ENCODE measurements at regions of chr11 and their contacts with region 1.

Region 1: GRCh38 chr11:128905345-128906184 is 14.4 kb downstream of the KCNJ5 start:
- DNase-seq: peak in 1 of 2 experiments; percentile 80
- H3K4me3 ChIP-seq: peak overlapping the region; percentile 49 to 68 (median 54)
- H3K27ac ChIP-seq: no peak overlapping the region
- H3K4me1 ChIP-seq: peaks cover 11 to 30% (median 23%) of the 10 kb centered on the region in 4 experiments
- H3K27me3 ChIP-seq: peaks cover 45 to 67% (median 61%) of the 10 kb centered on the region in 4 experiments
- CTCF ChIP-seq: peak; percentile 44 to 58 (median 48)
- EP300 ChIP-seq: no peak
- POLR2A ChIP-seq: no peak
- RAD21 ChIP-seq: peak; percentile 25 to 39; a peak in 2 of 4 replicates

Region 2: DNA sequence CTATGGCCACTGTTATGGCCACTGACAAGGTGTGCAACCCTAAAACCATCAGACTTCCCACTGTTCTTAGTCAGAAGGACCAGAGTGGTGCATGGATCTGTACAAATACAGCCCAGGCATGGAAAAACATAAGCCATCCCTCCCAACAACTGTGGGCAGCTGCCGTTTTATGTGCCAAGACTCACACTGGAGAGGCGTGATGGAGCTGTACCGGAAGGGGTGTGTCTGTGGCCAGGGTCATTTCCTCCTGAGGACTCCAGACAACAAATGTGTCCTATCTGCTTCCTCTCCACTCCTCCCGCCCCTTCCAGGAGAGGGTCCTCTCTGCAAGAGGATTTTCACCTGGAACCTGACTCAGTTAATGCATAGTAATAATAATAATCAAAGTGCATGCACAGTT is 67.9 kb before region 1 on chr11:
- CTCF ChIA-PET with region 1: no interaction called
- POLR2A ChIA-PET with region 1: no interaction called
- DNase-seq: no peak
- H3K4me3 ChIP-seq: no peak overlapping the region
- H3K27ac ChIP-seq: no peak overlapping the region
- H3K4me1 ChIP-seq: peaks cover 0 to 6% (median 0%) of the 10 kb centered on the region in 4 experiments; a peak in 2 of 7 replicates
- H3K27me3 ChIP-seq: no peaks in the 10 kb centered on the region
- CTCF ChIP-seq: no peak
- EP300 ChIP-seq: no peak
- POLR2A ChIP-seq: no peak
- RAD21 ChIP-seq: no peak

Region 3: DNA sequence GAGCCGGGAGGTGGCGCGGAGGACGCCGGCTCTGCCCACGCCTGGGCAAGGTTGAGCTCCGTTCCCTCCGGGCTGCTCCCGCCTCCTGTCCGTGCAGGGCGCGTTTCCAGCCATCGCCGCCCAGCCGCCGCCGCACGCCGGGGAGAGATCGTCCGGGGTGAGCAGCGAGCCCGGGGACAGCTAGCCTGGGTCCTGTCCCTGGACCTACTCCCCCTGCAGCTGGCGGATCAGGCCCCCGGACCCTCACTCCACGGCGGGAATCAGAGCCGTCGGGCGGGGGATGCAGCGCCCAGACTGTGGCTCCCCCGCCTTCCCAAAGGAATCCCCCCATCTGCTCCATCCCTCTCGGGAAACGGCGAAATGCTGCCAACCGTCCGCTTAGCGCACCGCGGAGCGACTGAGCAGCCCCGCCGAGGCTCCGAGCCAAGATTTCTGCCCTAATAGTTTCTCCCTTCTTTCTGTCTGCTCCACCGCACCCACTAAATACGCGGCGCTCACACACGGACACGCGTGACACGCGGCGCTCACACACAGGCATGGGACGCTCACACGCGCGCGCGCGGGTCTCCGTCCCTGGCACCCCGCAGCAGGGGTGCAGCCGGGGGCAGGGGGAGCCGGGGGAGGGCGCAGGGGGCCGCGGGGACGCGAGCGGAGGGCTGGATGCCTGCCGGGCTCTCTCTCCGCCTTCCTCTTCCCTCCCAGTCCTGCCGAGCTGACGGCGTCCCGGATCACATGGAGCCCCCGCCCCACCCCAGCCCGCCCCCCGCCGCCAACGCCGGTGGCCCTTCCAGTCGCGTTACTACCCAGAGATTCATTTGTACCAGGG is 14.8 kb before region 1 on chr11 and contains the start of gene KCNJ5:
- CTCF ChIA-PET with region 1: interaction called, 332 read pairs
- POLR2A ChIA-PET with region 1: interaction called, 19 read pairs
- DNase-seq: peak in 1 of 2 experiments; percentile 77
- H3K4me3 ChIP-seq: peak within 1 kb of the TSS; percentile 35 to 67 (median 50)
- H3K27ac ChIP-seq: no peak within 1 kb of the TSS
- H3K4me1 ChIP-seq: peaks cover 4 to 15% (median 12%) of the 10 kb centered on the region in 4 experiments; a peak in 6 of 7 replicates
- H3K27me3 ChIP-seq: peaks cover 35 to 84% (median 82%) of the 10 kb centered on the region in 4 experiments
- CTCF ChIP-seq: no peak
- EP300 ChIP-seq: no peak
- POLR2A ChIP-seq: no peak
- RAD21 ChIP-seq: no peak
- total RNA-seq, gene KCNJ5: not detected in 2 replicates

Region 4: GRCh38 chr11:128928400-128928799 is 22.8 kb after region 1 on chr11:
- CTCF ChIA-PET with region 1: interaction called, 108 read pairs
- POLR2A ChIA-PET with region 1: no interaction called
- DNase-seq: no peak
- H3K4me3 ChIP-seq: no peak overlapping the region
- H3K27ac ChIP-seq: no peak overlapping the region
- H3K4me1 ChIP-seq: peaks cover 5 to 41% (median 17%) of the 10 kb centered on the region in 4 experiments
- H3K27me3 ChIP-seq: peaks cover 2 to 50% (median 42%) of the 10 kb centered on the region in 4 experiments
- CTCF ChIP-seq: no peak
- EP300 ChIP-seq: no peak
- POLR2A ChIP-seq: no peak
- RAD21 ChIP-seq: no peak

Region 5: DNA sequence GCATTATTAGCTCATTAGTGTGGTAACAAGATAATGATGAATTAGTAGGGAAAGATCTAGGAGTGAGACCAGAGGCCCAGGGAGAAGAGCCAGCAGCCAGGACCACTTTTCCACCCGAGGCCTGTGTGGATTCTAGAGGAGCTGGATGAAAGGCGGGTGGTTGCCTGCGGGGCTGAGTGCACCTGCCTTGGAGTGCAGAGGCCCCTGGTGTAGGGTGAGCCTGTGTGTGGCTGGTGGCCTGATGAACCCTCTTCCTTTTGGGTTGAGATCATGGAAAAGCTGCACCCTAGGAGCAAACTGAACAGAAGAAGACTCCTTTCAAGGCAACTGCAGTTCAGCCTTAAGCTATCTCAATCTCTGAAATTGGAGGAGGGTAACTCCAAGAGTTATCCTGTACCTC is 43.0 kb after region 1 on chr11:
- CTCF ChIA-PET with region 1: interaction called, 108 read pairs
- POLR2A ChIA-PET with region 1: interaction called, 4 read pairs
- DNase-seq: no peak
- H3K4me3 ChIP-seq: no peak overlapping the region
- H3K27ac ChIP-seq: no peak overlapping the region
- H3K4me1 ChIP-seq: no peaks in the 10 kb centered on the region
- H3K27me3 ChIP-seq: peaks cover 0 to 2% (median 0%) of the 10 kb centered on the region in 4 experiments; a peak in 3 of 7 replicates
- CTCF ChIP-seq: peak; percentile 67 to 73 (median 71)
- EP300 ChIP-seq: no peak
- POLR2A ChIP-seq: no peak
- RAD21 ChIP-seq: peak; percentile 73 to 79

Measured in H1 (cell line).